H1 (cell line): ENCODE measurements at regions of chr12 and their contacts with region 1.

Region 1: DNA sequence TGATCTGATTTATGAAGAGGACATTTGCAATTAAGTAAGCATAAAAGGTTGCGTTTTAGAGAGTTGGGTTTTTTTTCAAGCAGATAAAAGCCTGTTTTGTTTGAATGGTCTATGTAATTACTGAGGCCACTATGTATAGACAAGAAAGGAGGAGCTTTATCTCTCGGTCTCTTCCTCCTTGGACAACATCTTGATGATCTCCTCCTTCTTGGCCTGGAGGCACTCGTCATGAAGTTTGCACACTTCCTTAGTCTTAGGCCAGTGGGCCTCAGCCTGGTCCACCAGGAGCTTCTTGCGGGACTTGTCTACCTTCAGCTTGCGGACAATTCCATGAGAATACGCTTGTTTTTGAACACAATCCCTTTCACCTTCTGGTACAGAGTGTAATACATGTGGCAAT is 5.4 kb upstream of the DUSP16 start:
- DNase-seq: no peak
- H3K4me3 ChIP-seq: no peak overlapping the region
- H3K27ac ChIP-seq: no peak overlapping the region
- H3K4me1 ChIP-seq: peaks cover 0 to 9% (median 5%) of the 10 kb centered on the region in 4 experiments; a peak in 3 of 7 replicates
- H3K27me3 ChIP-seq: no peaks in the 10 kb centered on the region
- CTCF ChIP-seq: no peak
- EP300 ChIP-seq: no peak
- POLR2A ChIP-seq: no peak
- RAD21 ChIP-seq: no peak

Region 2: GRCh38 chr12:12442548-12443071 is 125.4 kb before region 1 on chr12:
- CTCF ChIA-PET with region 1: no interaction called
- POLR2A ChIA-PET with region 1: no interaction called
- DNase-seq: no peak
- H3K4me3 ChIP-seq: no peak overlapping the region
- H3K27ac ChIP-seq: no peak overlapping the region
- H3K4me1 ChIP-seq: peaks cover 0 to 3% (median 0%) of the 10 kb centered on the region in 4 experiments; a peak in 1 of 7 replicates
- H3K27me3 ChIP-seq: no peaks in the 10 kb centered on the region; a peak in 1 of 7 replicates
- CTCF ChIP-seq: no peak
- EP300 ChIP-seq: no peak
- POLR2A ChIP-seq: no peak
- RAD21 ChIP-seq: no peak

Region 3: GRCh38 chr12:12645485-12645884 is 77.4 kb after region 1 on chr12:
- CTCF ChIA-PET with region 1: interaction called, 10 read pairs
- POLR2A ChIA-PET with region 1: no interaction called
- DNase-seq: no peak
- H3K4me3 ChIP-seq: no peak overlapping the region
- H3K27ac ChIP-seq: no peak overlapping the region
- H3K4me1 ChIP-seq: peaks cover 0 to 19% (median 1%) of the 10 kb centered on the region in 4 experiments; a peak in 2 of 7 replicates
- H3K27me3 ChIP-seq: no peaks in the 10 kb centered on the region
- CTCF ChIP-seq: peak; percentile 6 to 70 (median 62)
- EP300 ChIP-seq: no peak
- POLR2A ChIP-seq: no peak
- RAD21 ChIP-seq: peak; percentile 53 to 68